Tibial artery (tissue), 4 donors: ENCODE measurements at regions of chr3 and their contacts with region 1.

Region 1: DNA sequence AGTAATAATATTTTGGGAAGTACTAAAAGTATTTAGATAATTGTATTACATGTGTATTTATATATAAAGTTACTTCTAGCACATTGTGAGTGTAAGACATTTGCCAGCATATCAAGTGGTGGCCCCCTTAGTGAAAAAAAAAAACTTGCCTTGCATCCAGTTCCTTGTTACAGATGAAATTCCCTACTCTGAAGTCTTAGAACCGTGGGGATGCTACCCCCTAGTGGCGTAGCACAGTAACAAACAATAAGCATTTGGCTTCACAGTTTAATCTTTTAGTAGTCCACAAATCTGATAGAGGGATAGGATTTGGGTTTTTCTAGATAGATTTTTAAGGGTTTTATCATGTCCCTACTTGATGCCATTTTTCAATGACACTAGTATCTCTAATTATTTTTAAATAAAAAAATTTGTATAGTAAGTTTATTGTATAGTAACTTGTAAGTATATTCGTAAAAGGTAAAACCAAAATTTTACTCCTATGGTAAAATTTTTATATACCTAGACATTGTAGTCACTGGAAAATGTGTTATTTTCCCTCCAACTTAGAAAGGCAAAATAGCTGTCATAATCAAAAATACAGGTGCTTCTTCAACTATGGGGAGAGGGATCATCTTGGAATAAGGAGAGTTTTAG is 14.3 kb downstream of the SMC4 start:
- DNase-seq: peak in 1 of 2 donors; percentile 41
- H3K4me3 ChIP-seq: no peak overlapping the region
- H3K27ac ChIP-seq: no peak overlapping the region
- H3K4me1 ChIP-seq: no peaks in the 10 kb centered on the region
- H3K27me3 ChIP-seq: no peaks in the 10 kb centered on the region
- CTCF ChIP-seq: peak; percentile 71 to 83

Region 2: GRCh38 chr3:160038862-160039562 is 374.7 kb before region 1 on chr3:
- intact Hi-C with region 1: loop called (anchors 5 kb)
- DNase-seq: peak; percentile 21 to 61
- H3K4me3 ChIP-seq: peak overlapping the region; percentile 34 to 46
- H3K27ac ChIP-seq: no peak overlapping the region
- H3K4me1 ChIP-seq: peaks cover 0 to 11% (median 7%) of the 10 kb centered on the region in 4 donors
- H3K27me3 ChIP-seq: peaks cover 0 to 9% of the 10 kb centered on the region in 2 donors
- CTCF ChIP-seq: no peak

Region 3: DNA sequence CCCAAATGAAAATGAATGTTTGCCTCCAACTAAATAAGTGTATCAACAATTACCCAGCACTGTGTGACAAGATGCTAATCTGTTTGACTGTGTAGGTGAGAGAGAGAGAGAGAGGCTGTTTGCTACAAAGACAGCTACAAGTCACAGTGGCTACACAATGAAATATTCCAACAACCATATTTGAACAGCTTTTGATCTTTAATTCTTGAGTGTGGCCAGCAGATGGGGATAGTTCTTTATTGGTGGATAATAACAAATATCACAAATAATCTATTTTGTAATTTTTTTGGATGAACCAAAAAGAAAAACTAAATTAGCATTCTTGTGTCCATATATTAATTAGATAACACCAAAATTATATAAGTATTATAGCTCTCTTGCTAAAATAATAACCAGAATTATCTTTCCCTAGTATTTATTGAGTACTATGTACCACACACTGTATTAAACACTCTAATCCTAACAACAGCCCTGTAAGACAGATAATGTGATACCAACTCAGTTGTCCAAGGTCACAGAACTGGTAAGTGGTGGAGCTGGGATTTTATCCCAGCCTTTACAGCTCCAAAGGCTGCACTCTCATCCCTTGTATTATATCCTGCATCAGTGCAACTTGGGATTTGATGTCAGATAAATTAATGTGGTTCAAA is 250.4 kb before region 1 on chr3:
- intact Hi-C with region 1: loop called (anchors 10 kb)
- DNase-seq: no peak
- H3K4me3 ChIP-seq: no peak overlapping the region
- H3K27ac ChIP-seq: no peak overlapping the region
- H3K4me1 ChIP-seq: no peaks in the 10 kb centered on the region
- H3K27me3 ChIP-seq: no peaks in the 10 kb centered on the region
- CTCF ChIP-seq: peak; percentile 32 to 33